Heart right ventricle (tissue), 16 donors: ENCODE measurements at regions of chr9 and their contacts with region 1.

Region 1: DNA sequence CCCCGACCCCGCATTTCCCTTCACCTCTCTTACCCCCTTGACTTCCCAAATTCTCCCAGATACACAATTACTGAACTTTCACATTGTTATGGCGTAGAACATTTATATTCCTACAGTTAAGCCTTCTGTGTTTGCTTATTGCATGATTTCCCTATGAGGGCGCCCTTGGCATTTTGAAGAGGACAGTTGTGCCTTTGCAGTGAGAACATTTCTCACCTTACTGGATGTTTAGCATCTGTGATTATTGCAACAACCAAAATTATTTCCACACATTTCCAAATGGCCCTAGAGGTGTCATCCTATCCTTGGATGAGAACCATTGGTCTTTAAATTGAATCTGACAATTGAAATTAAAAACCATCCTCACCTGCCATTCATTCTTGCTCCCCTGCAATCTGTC is 104.0 kb downstream of the MAMDC2 start:
- DNase-seq: no peak
- ATAC-seq: no peak
- H3K4me3 ChIP-seq: no peak overlapping the region
- H3K27ac ChIP-seq: no peak overlapping the region
- H3K4me1 ChIP-seq: no peaks in the 10 kb centered on the region
- H3K27me3 ChIP-seq: no peaks in the 10 kb centered on the region
- CTCF ChIP-seq: no peak

Region 2: GRCh38 chr9:70218767-70219166 is 71.2 kb after region 1 on chr9:
- intact Hi-C with region 1: loop called in 1 of 10 experiments (anchors 10 kb)
- DNase-seq: no peak
- ATAC-seq: no peak
- H3K4me3 ChIP-seq: no peak overlapping the region
- H3K27ac ChIP-seq: no peak overlapping the region
- H3K4me1 ChIP-seq: no peaks in the 10 kb centered on the region
- H3K27me3 ChIP-seq: no peaks in the 10 kb centered on the region
- CTCF ChIP-seq: no peak